Activated CD4-positive, alpha-beta T cell treated with anti-CD3 and anti-CD28 coated beads, Interleukin-2, amount 10 ng/mL, durations not matched to agents 24 days and 14 days (primary cell): ENCODE measurements at regions of chr4 and their contacts with region 1.

Region 1: DNA sequence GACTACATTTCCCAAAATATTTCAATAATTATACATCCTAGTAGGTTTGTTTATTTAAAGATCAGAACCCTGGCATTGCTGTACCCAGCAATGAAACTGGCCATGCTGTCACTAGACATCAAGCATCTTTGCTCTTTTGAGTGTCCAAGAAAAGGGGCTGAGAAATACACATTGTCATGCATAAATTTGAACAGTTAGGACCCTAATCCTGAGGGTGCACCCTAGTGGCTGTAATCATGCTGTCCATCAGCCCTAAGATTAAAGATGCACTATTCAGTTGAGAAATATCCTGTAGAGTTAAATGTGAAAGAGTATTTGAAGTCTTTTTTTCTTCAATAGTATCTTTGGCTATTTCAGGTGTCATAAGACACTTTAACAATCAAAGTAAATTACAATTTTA is 108.8 kb downstream of the NFKB1 start:
- DNase-seq: no peak
- H3K4me3 Mint-ChIP-seq: no peak overlapping the region
- H3K27ac Mint-ChIP-seq: peak overlapping the region; percentile 73
- H3K4me1 Mint-ChIP-seq: peaks cover 73% of the 10 kb centered on the region
- H3K27me3 Mint-ChIP-seq: no peaks in the 10 kb centered on the region

Region 2: DNA sequence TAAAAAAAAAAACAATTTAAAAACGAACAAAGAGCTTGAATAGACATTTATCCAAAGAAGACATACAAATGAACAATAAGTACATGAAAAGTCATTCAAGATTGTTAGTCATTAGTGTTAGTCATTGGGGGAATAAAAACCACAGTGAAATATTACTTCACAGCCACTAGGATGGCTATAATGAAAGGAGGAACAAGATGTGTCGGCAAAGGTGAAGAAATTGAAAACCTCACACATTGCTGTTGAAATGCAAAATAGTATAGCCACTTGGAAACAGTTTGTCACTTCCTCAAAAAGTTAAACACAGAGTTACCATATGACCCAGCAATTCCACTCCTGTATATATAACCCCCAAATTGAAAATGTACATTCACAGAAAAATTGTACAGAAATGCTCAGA is 219.6 kb before region 1 on chr4:
- intact Hi-C with region 1: no loop called
- DNase-seq: no peak
- H3K4me3 Mint-ChIP-seq: no peak overlapping the region
- H3K27ac Mint-ChIP-seq: peak overlapping the region; percentile 69
- H3K4me1 Mint-ChIP-seq: peaks cover 10% of the 10 kb centered on the region
- H3K27me3 Mint-ChIP-seq: peaks cover 5% of the 10 kb centered on the region

Region 3: GRCh38 chr4:102574317-102574716 is 35.7 kb before region 1 on chr4:
- intact Hi-C with region 1: no loop called
- DNase-seq: peak; percentile 67
- H3K4me3 Mint-ChIP-seq: peak overlapping the region; percentile 47
- H3K27ac Mint-ChIP-seq: peak overlapping the region; percentile 79
- H3K4me1 Mint-ChIP-seq: peaks cover 54% of the 10 kb centered on the region
- H3K27me3 Mint-ChIP-seq: no peaks in the 10 kb centered on the region

Region 4: DNA sequence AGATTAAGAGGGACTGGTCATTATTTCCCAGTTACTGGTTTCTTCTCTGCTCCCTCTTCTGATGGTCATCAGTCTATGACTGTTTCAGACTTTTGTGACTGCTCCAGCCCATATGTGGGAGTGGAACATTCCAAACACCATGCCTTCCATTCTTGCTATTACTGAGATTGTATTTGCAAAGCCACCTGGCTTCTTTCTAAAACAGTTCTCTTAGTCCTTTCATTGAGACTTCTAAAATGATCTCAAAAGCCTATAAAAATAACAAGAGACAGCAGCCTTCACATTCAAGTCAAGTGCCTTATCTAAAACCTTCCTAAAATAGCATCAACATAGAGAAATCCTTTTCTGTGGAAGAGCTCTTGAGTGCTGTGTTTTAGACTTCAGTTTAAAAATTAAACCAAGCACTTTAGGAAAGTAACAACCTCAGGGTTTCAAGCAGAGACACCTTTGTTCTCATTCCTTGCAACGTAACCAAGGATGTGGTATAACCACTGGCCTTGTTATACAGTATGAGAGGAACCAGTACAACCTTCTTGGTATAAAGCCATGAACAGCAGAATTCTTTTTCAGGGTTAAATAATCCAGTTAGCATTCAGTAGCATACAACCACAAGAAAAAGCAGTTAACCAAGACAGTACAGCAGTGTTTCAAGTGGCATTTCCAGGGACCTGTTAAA is 11.8 kb before region 1 on chr4:
- intact Hi-C with region 1: loop called (anchors 1 kb)
- DNase-seq: peak; percentile 86
- H3K4me3 Mint-ChIP-seq: peak overlapping the region; percentile 24
- H3K27ac Mint-ChIP-seq: peak overlapping the region; percentile 91
- H3K4me1 Mint-ChIP-seq: peaks cover 65% of the 10 kb centered on the region
- H3K27me3 Mint-ChIP-seq: no peaks in the 10 kb centered on the region

Region 5: DNA sequence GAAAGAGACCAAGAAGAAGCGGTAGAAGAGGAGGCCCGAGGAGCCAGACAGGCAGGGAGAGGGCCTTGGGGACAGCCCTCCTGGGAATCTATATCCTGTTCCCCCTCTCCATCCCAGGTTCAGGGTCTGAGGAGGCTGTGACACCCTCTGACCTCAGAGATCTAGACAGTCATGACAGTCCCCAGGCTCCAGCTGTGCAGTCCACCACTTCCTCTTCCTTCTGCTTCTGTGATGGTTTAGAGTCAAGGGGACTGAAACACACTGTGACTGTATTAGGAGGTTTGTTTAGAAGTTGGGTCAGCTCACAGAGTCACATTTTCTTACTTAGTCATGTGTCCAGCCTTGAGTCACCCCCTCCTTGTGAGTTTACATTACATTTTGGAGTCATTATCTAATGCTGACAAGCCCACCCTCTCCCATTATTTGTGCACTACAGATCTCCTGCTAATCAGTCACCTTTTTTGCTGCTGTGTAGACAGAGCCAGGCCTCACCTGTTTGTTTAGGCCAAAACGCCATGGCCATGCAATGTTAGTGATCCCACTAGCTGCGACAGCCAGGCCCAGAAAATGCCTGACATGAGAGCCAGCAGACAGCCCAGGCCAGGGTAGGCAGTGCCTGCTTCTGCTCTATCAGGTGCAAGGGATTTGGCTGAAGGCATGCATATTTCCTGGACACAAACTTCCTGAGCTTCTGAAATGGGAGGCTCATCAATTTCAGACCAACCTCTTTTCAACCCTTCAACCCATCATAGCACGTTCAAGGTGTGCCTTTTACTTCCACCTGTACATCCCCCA is 124.8 kb after region 1 on chr4:
- intact Hi-C with region 1: no loop called
- DNase-seq: peak; percentile 70
- H3K4me3 Mint-ChIP-seq: no peak overlapping the region
- H3K27ac Mint-ChIP-seq: peak overlapping the region; percentile 41
- H3K4me1 Mint-ChIP-seq: peaks cover 12% of the 10 kb centered on the region
- H3K27me3 Mint-ChIP-seq: no peaks in the 10 kb centered on the region